OCI-LY7 (cell line): ENCODE measurements at regions of chr1 and their contacts with region 1.

Region 1: GRCh38 chr1:27154991-27155781 is at the start of gene SLC9A1:
- DNase-seq: peak; percentile 93
- H3K4me3 ChIP-seq: peak within 1 kb of the TSS; percentile 77
- H3K27ac ChIP-seq: peak within 1 kb of the TSS; percentile 30
- H3K4me1 ChIP-seq: peaks cover 47% of the 10 kb centered on the region
- CTCF ChIP-seq: peak; percentile 80
- total RNA-seq, gene SLC9A1: 5.3 and 5.8 TPM in 2 replicates

Region 2: DNA sequence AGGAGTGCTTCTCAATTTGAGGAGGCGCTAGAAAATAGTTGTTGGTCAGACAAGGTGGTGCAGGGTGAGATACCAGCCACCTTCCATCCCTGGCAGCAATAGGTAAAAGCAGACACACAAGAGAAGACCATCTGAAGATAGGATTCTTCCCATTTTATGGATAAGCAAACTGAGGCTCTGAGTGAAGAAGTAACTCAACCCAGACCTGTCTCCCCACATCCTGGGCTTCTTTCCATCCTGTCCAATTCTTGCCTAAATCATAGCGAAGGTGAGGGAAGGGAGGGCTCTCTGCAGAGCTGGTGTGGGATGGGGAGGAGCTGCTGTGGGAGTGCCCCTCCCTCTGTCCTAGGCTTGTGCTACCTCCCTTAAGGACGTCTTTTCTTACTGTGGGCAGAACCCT is 183.6 kb before region 1 on chr1:
- CTCF ChIA-PET with region 1: no interaction called
- POLR2A ChIA-PET with region 1: no interaction called
- intact Hi-C with region 1: no loop called
- DNase-seq: no peak
- H3K4me3 ChIP-seq: no peak overlapping the region
- H3K27ac ChIP-seq: no peak overlapping the region
- H3K4me1 ChIP-seq: no peaks in the 10 kb centered on the region
- CTCF ChIP-seq: no peak

Region 3: GRCh38 chr1:27111626-27112573 is 43.3 kb before region 1 on chr1:
- CTCF ChIA-PET with region 1: interaction called, 3 read pairs
- POLR2A ChIA-PET with region 1: interaction called, 3 read pairs
- intact Hi-C with region 1: loop called (anchors 2 kb)
- DNase-seq: peak; percentile 80
- H3K4me3 ChIP-seq: no peak overlapping the region
- H3K27ac ChIP-seq: peak overlapping the region; percentile 37
- H3K4me1 ChIP-seq: peaks cover 21% of the 10 kb centered on the region
- CTCF ChIP-seq: peak; percentile 64

Region 4: DNA sequence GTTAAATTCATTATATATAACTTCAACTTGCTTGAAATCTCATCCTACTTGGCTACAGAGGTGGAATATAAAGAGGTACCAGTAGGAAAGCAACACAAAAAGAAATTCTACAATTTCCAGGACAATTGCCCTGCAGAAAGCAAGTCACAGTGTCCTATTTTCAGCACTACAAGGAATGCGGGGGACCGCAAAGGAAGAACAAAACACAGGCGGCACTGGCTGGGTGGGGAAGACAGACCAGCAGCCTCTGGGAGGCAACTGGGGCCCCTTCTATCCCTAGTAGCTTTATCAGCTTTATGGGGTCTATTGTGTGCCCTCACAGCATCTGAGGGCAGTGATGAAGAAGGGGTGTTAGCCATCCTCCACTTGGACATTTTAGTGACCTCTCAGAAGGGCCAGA is 30.8 kb before region 1 on chr1:
- CTCF ChIA-PET with region 1: no interaction called
- POLR2A ChIA-PET with region 1: no interaction called
- intact Hi-C with region 1: no loop called
- DNase-seq: no peak
- H3K4me3 ChIP-seq: no peak overlapping the region
- H3K27ac ChIP-seq: no peak overlapping the region
- H3K4me1 ChIP-seq: no peaks in the 10 kb centered on the region
- CTCF ChIP-seq: no peak

Region 5: GRCh38 chr1:27136998-27137542 is 18.1 kb before region 1 on chr1:
- CTCF ChIA-PET with region 1: interaction called, 6 read pairs
- POLR2A ChIA-PET with region 1: interaction called, 48 read pairs
- intact Hi-C with region 1: loop called (anchors 2 kb)
- DNase-seq: peak; percentile 86
- H3K4me3 ChIP-seq: peak overlapping the region; percentile 62
- H3K27ac ChIP-seq: peak overlapping the region; percentile 78
- H3K4me1 ChIP-seq: peaks cover 53% of the 10 kb centered on the region
- CTCF ChIP-seq: no peak

Region 6: DNA sequence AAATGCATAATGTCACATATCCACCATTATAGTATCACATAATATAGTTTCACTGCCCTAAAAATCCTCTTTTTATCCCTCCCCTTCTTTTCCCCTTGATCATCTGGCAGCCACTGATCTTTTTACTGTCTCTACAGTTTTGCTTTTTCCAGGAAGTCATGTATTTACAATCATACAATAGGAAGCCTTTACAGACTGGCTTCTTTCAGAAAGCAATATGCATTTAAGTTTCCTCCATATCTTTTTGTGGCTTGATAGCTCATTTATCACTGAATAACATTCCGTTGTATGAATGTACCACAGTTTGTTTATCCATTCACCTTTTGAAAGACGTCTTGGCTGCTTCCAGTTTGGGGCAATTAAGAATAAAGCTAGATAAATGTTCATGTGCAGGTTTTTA is 64.9 kb after region 1 on chr1:
- CTCF ChIA-PET with region 1: no interaction called
- POLR2A ChIA-PET with region 1: no interaction called
- intact Hi-C with region 1: no loop called
- DNase-seq: no peak
- H3K4me3 ChIP-seq: no peak overlapping the region
- H3K27ac ChIP-seq: no peak overlapping the region
- H3K4me1 ChIP-seq: no peaks in the 10 kb centered on the region
- CTCF ChIP-seq: no peak